Spleen (tissue), 13 donors: ENCODE measurements at regions of chr16 and their contacts with region 1.

Region 1: GRCh38 chr16:49491771-49492761 is 118.5 kb downstream of the C16orf78 start:
- DNase-seq: peak; percentile 83
- H3K4me3 ChIP-seq: peak overlapping the region in 7 of 8 donors; percentile 7 to 58 (median 26)
- H3K27ac ChIP-seq: peak overlapping the region in 6 of 8 donors; percentile 26 to 74 (median 59)
- H3K4me1 ChIP-seq: peaks cover 0 to 15% (median 14%) of the 10 kb centered on the region in 6 donors
- H3K27me3 ChIP-seq: peaks cover 0 to 14% (median 0%) of the 10 kb centered on the region in 7 donors
- CTCF ChIP-seq: peak; percentile 29 to 93 (median 88)
- POLR2A ChIP-seq: no peak

Region 2: GRCh38 chr16:49542391-49542891 is 50.4 kb after region 1 on chr16:
- intact Hi-C with region 1: no loop called
- DNase-seq: peak; percentile 56
- H3K4me3 ChIP-seq: no peak overlapping the region
- H3K27ac ChIP-seq: no peak overlapping the region
- H3K4me1 ChIP-seq: no peaks in the 10 kb centered on the region
- H3K27me3 ChIP-seq: no peaks in the 10 kb centered on the region
- CTCF ChIP-seq: no peak
- POLR2A ChIP-seq: no peak

Region 3: DNA sequence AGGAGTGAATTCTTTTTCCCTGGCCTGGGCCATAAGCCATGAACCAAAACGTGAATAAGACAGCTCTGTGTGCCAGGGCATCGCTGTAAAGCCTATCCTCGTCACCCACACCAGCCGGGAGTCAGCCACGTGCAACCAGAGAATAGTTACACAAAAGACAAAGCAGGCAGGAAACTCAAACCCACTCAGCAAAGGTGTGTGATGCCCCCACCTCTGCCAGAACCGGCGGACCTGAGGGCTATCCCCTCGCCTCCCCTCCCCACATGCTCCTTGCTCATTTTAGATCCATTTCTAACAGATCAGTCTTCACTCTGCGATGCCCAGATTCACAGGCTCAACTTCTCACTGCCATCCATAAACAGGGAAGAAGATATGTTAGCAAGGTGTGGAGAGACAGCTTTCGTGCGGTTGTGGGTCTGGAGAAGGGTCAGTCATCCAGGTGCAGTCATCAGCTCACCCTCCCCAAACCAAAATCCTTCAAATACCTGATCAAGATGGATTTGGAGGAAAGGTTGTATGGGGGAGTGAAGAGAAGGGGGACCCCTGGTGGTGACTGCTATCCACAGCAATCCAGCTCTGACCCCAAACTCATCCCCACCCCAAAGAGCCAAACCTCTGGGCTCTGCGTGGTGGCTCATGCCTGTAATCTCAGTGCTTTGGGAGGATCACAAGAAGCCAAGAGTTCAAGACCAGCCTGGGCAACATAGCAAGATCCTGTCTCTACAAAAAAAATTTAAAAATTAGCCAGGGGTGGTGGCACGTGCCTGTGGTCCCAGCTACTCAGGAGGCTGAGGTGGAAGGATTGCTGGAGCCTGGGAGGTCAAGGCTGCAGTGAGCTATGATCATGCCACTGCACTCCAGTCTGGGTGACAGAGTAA is 100.7 kb after region 1 on chr16:
- intact Hi-C with region 1: loop called (anchors 10 kb)
- DNase-seq: peak; percentile 56
- H3K4me3 ChIP-seq: no peak overlapping the region
- H3K27ac ChIP-seq: no peak overlapping the region
- H3K4me1 ChIP-seq: peaks cover 0 to 23% (median 11%) of the 10 kb centered on the region in 6 donors
- H3K27me3 ChIP-seq: no peaks in the 10 kb centered on the region
- CTCF ChIP-seq: peak; percentile 23 to 85 (median 67)
- POLR2A ChIP-seq: no peak